BJ (cell line): ENCODE measurements at regions of chr19 and their contacts with region 1.

Region 1: DNA sequence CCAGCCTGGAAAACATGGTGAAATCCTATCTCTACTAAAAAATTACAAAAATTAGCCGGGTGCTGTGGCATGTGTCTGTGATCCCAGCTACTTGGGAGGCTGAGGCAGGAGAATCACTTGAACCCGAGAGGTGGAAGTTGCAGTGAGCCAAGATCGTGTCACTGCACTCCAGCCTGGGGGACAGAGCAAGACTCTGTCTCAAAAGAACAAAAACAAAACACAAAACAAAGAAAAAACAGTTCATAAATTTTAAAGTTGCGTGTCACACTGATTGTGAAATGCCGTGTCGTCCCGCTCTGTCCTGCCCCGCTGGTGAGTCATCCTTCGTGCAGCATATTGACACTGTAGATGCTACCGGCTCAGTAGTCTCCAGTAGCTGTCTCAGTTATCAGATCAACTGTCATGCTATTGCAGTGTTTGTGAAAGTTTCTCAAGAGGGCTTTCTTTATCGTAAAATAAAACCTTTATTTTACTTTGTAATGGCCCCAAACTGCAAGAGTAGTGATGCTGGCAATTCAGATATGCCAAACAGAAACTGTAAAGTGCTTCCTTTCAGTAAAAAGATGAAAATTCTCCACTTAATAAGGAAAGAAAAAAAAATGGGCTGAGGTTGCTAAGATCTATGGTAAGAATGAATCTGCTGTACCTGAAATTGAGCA is 36.4 kb upstream of the IGFL1 start:
- DNase-seq: peak; percentile 48
- H3K4me3 ChIP-seq: no peak overlapping the region
- H3K27me3 ChIP-seq: peaks cover 36% of the 10 kb centered on the region
- CTCF ChIP-seq: no peak

Region 2: GRCh38 chr19:46021531-46022041 is 171.5 kb before region 1 on chr19:
- CTCF ChIA-PET with region 1: interaction called, 13 read pairs
- POLR2A ChIA-PET with region 1: no interaction called
- DNase-seq: no peak
- H3K4me3 ChIP-seq: no peak overlapping the region
- H3K27me3 ChIP-seq: peaks cover 4% of the 10 kb centered on the region
- CTCF ChIP-seq: no peak

Region 3: GRCh38 chr19:46030812-46031550 is 162.1 kb before region 1 on chr19:
- CTCF ChIA-PET with region 1: interaction called, 22 read pairs
- POLR2A ChIA-PET with region 1: no interaction called
- DNase-seq: no peak
- H3K4me3 ChIP-seq: no peak overlapping the region
- H3K27me3 ChIP-seq: peaks cover 6% of the 10 kb centered on the region; the same call in 1 of the 2 replicates
- CTCF ChIP-seq: no peak

Region 4: GRCh38 chr19:46088101-46088500 is 105.0 kb before region 1 on chr19:
- CTCF ChIA-PET with region 1: interaction called, 55 read pairs
- POLR2A ChIA-PET with region 1: no interaction called
- DNase-seq: no peak
- H3K4me3 ChIP-seq: no peak overlapping the region
- H3K27me3 ChIP-seq: peaks cover 19% of the 10 kb centered on the region
- CTCF ChIP-seq: no peak

Region 5: DNA sequence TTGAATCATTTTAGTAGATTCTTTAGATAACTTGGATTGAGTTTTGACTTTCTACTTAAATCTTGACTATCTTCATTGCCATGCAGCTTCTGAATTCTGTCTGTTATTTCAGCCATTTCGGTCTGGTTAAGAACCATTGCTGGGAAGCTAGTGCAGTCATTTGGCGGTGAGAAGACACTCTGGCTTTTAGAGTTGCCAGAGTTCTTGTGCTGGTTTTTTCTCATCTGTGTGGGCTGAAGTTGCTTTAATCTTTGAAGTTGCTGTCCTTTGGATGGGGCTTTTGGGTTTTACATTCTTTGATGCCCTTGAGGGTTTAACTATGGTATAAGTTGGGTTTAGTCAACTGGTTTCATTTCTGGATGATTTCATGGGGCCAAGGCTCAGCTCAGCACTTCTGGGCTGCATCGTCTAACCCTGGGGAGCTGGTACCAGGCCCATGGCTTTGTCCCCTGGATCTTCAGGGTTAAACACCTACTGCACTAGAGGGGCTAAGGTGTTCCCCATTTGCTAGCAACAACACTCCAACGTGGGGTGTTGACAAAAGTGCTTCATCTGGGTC is 55.1 kb before region 1 on chr19:
- CTCF ChIA-PET with region 1: no interaction called
- POLR2A ChIA-PET with region 1: no interaction called
- DNase-seq: no peak
- H3K4me3 ChIP-seq: no peak overlapping the region
- H3K27me3 ChIP-seq: peaks cover 13% of the 10 kb centered on the region
- CTCF ChIP-seq: no peak

Region 6: GRCh38 chr19:46159418-46160232 is 33.5 kb before region 1 on chr19:
- CTCF ChIA-PET with region 1: no interaction called
- POLR2A ChIA-PET with region 1: no interaction called
- DNase-seq: no peak
- H3K4me3 ChIP-seq: no peak overlapping the region
- H3K27me3 ChIP-seq: peaks cover 5% of the 10 kb centered on the region
- CTCF ChIP-seq: no peak

Region 7: DNA sequence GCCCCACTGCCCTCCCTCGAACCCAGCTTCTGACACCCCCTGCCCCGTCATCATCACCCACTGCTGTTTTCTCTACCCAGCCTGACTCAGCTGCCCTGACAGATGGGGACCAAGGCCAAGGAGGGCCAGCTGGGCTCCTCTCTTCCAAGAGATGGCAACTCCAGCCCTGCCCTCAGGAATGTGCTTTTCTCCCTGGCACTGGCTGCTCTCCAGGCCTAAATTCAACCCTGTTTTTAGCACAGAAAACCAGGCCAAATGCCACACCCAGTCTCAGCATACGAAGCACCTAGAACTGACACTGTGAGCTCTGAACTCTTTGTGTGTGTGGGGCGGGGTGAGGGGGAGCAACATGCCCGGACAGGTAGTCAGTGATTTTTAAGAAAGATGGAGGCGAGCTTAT is 13.0 kb after region 1 on chr19:
- CTCF ChIA-PET with region 1: interaction called, 15 read pairs
- POLR2A ChIA-PET with region 1: no interaction called
- DNase-seq: no peak
- H3K4me3 ChIP-seq: no peak overlapping the region
- H3K27me3 ChIP-seq: peaks cover 14% of the 10 kb centered on the region
- CTCF ChIP-seq: no peak

Region 8: GRCh38 chr19:46265217-46265828 is 72.2 kb after region 1 on chr19:
- CTCF ChIA-PET with region 1: interaction called, 13 read pairs
- POLR2A ChIA-PET with region 1: no interaction called
- DNase-seq: peak; percentile 34
- H3K4me3 ChIP-seq: no peak overlapping the region
- H3K27me3 ChIP-seq: peaks cover 10% of the 10 kb centered on the region
- CTCF ChIP-seq: peak; percentile 82